ENCODE measurements at regions of chr11 and their contacts with region 1.

Region 1: GRCh38 chr11:59534676-59535075 is 23.3 kb downstream of the OR4D9 start:
- DNase-seq: no peak
- ATAC-seq: no peak
- H3K4me3 ChIP-seq: no peak overlapping the region
- H3K27ac ChIP-seq: no peak overlapping the region
- H3K4me1 ChIP-seq: no peaks in the 10 kb centered on the region
- H3K27me3 ChIP-seq: no peaks in the 10 kb centered on the region
- CTCF ChIP-seq: no peak
- EP300 ChIP-seq: no peak
- POLR2A ChIP-seq: no peak
- RAD21 ChIP-seq: no peak

Region 2: DNA sequence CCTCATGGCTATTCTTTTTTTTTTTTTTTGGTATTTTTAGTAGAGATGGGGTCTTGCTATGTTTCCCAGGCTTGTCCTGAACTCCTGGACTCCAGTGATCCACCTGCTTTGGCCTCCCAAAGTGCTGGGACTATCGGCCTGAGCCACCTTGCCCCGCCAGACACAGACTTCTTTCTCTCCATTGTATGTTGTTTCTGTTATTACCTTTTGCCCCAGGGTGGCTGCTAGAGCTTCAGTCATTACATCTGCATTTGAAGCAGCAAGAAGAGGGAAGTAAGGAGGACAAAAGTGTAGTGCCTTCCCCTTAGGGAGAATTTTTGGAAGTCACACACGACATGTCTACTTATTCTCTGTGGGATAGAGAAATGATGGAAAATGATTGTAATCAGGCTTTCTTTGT is 91.0 kb after region 1 on chr11:
- CTCF ChIA-PET with region 1: no interaction called
- POLR2A ChIA-PET with region 1: no interaction called
- RAD21 ChIA-PET with region 1: no interaction called
- SMC1A ChIA-PET with region 1: no interaction called
- in situ Hi-C with region 1: no loop called
- intact Hi-C with region 1: no loop called
- DNase-seq: no peak
- ATAC-seq: no peak
- H3K4me3 ChIP-seq: no peak overlapping the region
- H3K27ac ChIP-seq: no peak overlapping the region
- H3K4me1 ChIP-seq: no peaks in the 10 kb centered on the region
- H3K27me3 ChIP-seq: no peaks in the 10 kb centered on the region
- CTCF ChIP-seq: no peak
- EP300 ChIP-seq: no peak
- POLR2A ChIP-seq: no peak
- RAD21 ChIP-seq: no peak

Region 3: DNA sequence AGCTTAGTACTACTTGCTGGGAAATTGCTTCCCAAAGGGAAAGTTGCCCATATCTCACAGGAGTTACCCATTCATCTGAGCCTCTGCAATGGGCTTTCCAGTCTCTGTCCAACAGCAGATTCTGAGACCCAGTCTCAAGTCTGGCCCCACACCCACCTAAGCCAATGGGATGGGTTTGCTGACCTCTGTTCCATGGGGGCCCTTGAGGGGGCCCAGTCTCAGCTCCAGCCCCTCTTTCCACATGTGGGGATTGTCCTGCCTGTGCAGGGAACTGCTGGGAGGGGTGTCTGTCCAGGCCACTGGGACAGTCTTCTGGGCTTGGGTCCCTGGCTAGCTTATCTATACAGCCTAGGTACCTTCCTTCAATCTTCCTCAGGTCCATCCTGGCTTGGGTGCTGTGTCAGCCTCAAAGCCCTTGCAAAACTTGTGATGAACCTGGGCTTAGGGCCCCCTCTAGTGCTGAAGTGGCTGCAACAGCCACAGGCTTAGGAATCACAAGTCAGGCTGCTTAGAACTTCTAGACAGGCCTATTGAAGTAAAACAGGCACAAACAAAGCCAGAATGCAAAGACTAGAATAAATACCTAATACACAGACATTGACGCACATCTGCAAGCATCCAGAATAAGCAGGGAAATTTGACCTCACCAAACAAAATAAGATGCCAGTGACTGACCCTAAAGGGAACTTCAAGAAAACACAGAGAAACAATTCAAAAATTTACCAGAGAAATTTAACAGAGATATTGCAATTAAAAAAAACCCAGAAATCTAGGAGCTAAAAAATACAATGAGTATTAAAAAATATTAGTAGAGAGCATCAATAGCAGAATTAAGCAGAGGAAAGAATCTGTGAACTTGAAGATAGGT is 145.8 kb after region 1 on chr11:
- CTCF ChIA-PET with region 1: interaction called, 27 read pairs
- POLR2A ChIA-PET with region 1: no interaction called
- RAD21 ChIA-PET with region 1: interaction called, 10 read pairs
- SMC1A ChIA-PET with region 1: interaction called, 12 read pairs
- in situ Hi-C with region 1: loop called (anchors 10 kb)
- intact Hi-C with region 1: loop called (anchors 1 kb)
- DNase-seq: peak; percentile 20
- ATAC-seq: peak; percentile 99
- H3K4me3 ChIP-seq: no peak overlapping the region
- H3K27ac ChIP-seq: no peak overlapping the region
- H3K4me1 ChIP-seq: no peaks in the 10 kb centered on the region
- H3K27me3 ChIP-seq: no peaks in the 10 kb centered on the region
- CTCF ChIP-seq: peak; percentile 76 to 92 (median 80)
- EP300 ChIP-seq: no peak
- POLR2A ChIP-seq: no peak
- RAD21 ChIP-seq: peak; percentile 78

Region 4: GRCh38 chr11:59802639-59803176 is 268.0 kb after region 1 on chr11:
- CTCF ChIA-PET with region 1: interaction called, 13 read pairs
- POLR2A ChIA-PET with region 1: no interaction called
- RAD21 ChIA-PET with region 1: interaction called, 5 read pairs
- SMC1A ChIA-PET with region 1: interaction called, 4 read pairs
- in situ Hi-C with region 1: loop called (anchors 5 kb)
- intact Hi-C with region 1: loop called (anchors 1 kb)
- DNase-seq: no peak
- ATAC-seq: peak; percentile 82
- H3K4me3 ChIP-seq: no peak overlapping the region
- H3K27ac ChIP-seq: no peak overlapping the region
- H3K4me1 ChIP-seq: no peaks in the 10 kb centered on the region
- H3K27me3 ChIP-seq: no peaks in the 10 kb centered on the region
- CTCF ChIP-seq: peak; percentile 47 to 73 (median 65); a peak in 5 of 6 replicates
- EP300 ChIP-seq: no peak
- POLR2A ChIP-seq: no peak
- RAD21 ChIP-seq: peak; percentile 86

Measured in GM12878 (cell line).